MCF 10A (cell line): ENCODE measurements at regions of chr1 and their contacts with region 1.

Region 1: GRCh38 chr1:246923482-246923881 is 8.3 kb downstream of the AHCTF1 start:
- DNase-seq: no peak
- H3K4me3 Mint-ChIP-seq: no peak overlapping the region
- H3K27ac Mint-ChIP-seq: no peak overlapping the region
- H3K4me1 Mint-ChIP-seq: peaks cover 25% of the 10 kb centered on the region
- H3K27me3 Mint-ChIP-seq: no peaks in the 10 kb centered on the region
- CTCF ChIP-seq: no peak

Region 2: GRCh38 chr1:246809473-246809872 is 114.0 kb before region 1 on chr1:
- CTCF ChIA-PET with region 1: no interaction called
- POLR2A ChIA-PET with region 1: no interaction called
- intact Hi-C with region 1: no loop called
- DNase-seq: no peak
- H3K4me3 Mint-ChIP-seq: no peak overlapping the region
- H3K27ac Mint-ChIP-seq: no peak overlapping the region
- H3K4me1 Mint-ChIP-seq: no peaks in the 10 kb centered on the region
- H3K27me3 Mint-ChIP-seq: peaks cover 15% of the 10 kb centered on the region
- CTCF ChIP-seq: no peak

Region 3: GRCh38 chr1:247172996-247173395 is 249.5 kb after region 1 on chr1:
- CTCF ChIA-PET with region 1: no interaction called
- POLR2A ChIA-PET with region 1: no interaction called
- intact Hi-C with region 1: loop called (anchors 10 kb)
- DNase-seq: no peak
- H3K4me3 Mint-ChIP-seq: no peak overlapping the region
- H3K27ac Mint-ChIP-seq: no peak overlapping the region
- H3K4me1 Mint-ChIP-seq: no peaks in the 10 kb centered on the region
- H3K27me3 Mint-ChIP-seq: no peaks in the 10 kb centered on the region
- CTCF ChIP-seq: no peak